CD14-positive monocyte (primary cell): ENCODE measurements at regions of chr14 and their contacts with region 1.

Region 1: GRCh38 chr14:35301735-35302528 is 9.8 kb downstream of the PSMA6 start:
- DNase-seq: no peak
- H3K4me3 ChIP-seq: peak overlapping the region in 1 of 3 experiments; percentile 0
- H3K4me3 Mint-ChIP-seq: no peak overlapping the region
- H3K27ac ChIP-seq: peak overlapping the region in 1 of 2 donors; percentile 63
- H3K27ac Mint-ChIP-seq: peak overlapping the region in 6 of 7 donors; percentile 5 to 90 (median 86)
- H3K4me1 ChIP-seq: peaks cover 54 to 74% of the 10 kb centered on the region in 2 donors
- H3K4me1 Mint-ChIP-seq: peaks cover 66% of the 10 kb centered on the region
- H3K27me3 ChIP-seq: no peaks in the 10 kb centered on the region
- H3K27me3 Mint-ChIP-seq: no peaks in the 10 kb centered on the region
- CTCF ChIP-seq: no peak

Region 2: DNA sequence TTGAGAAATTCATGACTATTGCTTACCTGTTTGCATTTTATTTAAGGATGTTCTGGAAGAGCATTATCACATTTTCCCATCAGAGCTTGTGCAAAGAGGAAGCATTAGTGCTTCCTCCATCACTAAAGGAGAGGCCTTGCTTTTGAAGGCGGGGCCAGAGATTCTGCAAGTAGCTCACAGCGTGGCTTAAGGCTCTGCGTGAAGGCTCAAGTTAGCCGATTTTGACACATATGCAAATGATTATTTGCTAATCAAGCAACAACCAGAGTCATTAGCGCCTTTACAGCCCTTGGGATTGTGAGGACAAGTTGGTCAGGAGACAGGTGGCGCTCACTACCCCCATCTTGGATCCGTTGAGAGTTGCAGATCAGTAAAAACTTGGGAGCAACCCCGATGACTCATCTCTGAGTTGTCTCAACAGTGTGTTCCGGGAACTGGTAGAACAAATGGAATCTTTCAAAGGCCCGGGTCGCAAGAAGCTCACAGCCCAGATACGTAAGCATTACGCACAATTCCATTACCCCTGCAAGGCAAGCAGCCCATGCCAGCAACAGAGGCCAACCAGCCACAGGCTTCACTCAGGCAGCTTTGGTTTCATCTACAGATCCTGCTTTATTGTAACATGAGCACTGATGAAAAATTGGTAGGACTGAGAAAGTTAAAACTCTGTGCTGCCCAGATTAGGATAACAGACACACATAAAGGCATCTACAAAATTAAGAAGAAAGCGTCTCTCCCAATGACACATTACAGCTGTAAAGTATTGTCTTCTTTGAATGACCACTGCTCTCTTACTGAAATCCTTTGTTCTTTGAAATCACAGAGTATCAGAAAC is 805.0 kb before region 1 on chr14:
- intact Hi-C with region 1: no loop called
- DNase-seq: peak; percentile 22 to 56 (median 40)
- H3K4me3 ChIP-seq: peak overlapping the region in 1 of 3 experiments; percentile 60
- H3K4me3 Mint-ChIP-seq: peak overlapping the region; percentile 65 to 76
- H3K27ac ChIP-seq: peak overlapping the region; percentile 13 to 38
- H3K27ac Mint-ChIP-seq: peak overlapping the region in 4 of 7 donors; percentile 44 to 78 (median 70)
- H3K4me1 ChIP-seq: peaks cover 11 to 14% of the 10 kb centered on the region in 2 donors
- H3K4me1 Mint-ChIP-seq: peaks cover 11% of the 10 kb centered on the region
- H3K27me3 ChIP-seq: no peaks in the 10 kb centered on the region
- H3K27me3 Mint-ChIP-seq: peaks cover 0 to 4% (median 0%) of the 10 kb centered on the region in 3 donors
- CTCF ChIP-seq: no peak

Region 3: GRCh38 chr14:35046048-35046741 is 255.7 kb before region 1 on chr14 and contains the start of gene FAM177A1:
- intact Hi-C with region 1: loop called in 1 of 2 experiments (anchors 10 kb)
- DNase-seq: peak; percentile 98 to 99 (median 98)
- H3K4me3 ChIP-seq: peak within 1 kb of the TSS; percentile 72 to 94 (median 86)
- H3K4me3 Mint-ChIP-seq: peak within 1 kb of the TSS; percentile 96 to 98
- H3K27ac ChIP-seq: peak within 1 kb of the TSS; percentile 89 to 95
- H3K27ac Mint-ChIP-seq: peak within 1 kb of the TSS; percentile 98 to 100 (median 99)
- H3K4me1 ChIP-seq: peaks cover 15 to 24% of the 10 kb centered on the region in 2 donors
- H3K4me1 Mint-ChIP-seq: peaks cover 26% of the 10 kb centered on the region
- H3K27me3 ChIP-seq: no peaks in the 10 kb centered on the region
- H3K27me3 Mint-ChIP-seq: peaks cover 0 to 3% (median 0%) of the 10 kb centered on the region in 3 donors
- CTCF ChIP-seq: no peak
- polyA plus RNA-seq, gene FAM177A1: 12.5 to 48.1 (median 29.4) TPM

Region 4: GRCh38 chr14:35341446-35342159 is 39.7 kb after region 1 on chr14:
- intact Hi-C with region 1: loop called in 1 of 2 experiments (anchors 5 kb)
- DNase-seq: peak; percentile 52 to 74 (median 60)
- H3K4me3 ChIP-seq: peak overlapping the region in 1 of 3 experiments; percentile 46
- H3K4me3 Mint-ChIP-seq: peak overlapping the region; percentile 43 to 79
- H3K27ac ChIP-seq: peak overlapping the region; percentile 69 to 78
- H3K27ac Mint-ChIP-seq: peak overlapping the region; percentile 83 to 93 (median 90)
- H3K4me1 ChIP-seq: peaks cover 71 to 78% of the 10 kb centered on the region in 2 donors
- H3K4me1 Mint-ChIP-seq: peaks cover 72% of the 10 kb centered on the region
- H3K27me3 ChIP-seq: no peaks in the 10 kb centered on the region
- H3K27me3 Mint-ChIP-seq: peaks cover 0 to 2% (median 1%) of the 10 kb centered on the region in 3 donors
- CTCF ChIP-seq: no peak